ENCODE measurements at regions of chr13 and their contacts with region 1.

Region 1: DNA sequence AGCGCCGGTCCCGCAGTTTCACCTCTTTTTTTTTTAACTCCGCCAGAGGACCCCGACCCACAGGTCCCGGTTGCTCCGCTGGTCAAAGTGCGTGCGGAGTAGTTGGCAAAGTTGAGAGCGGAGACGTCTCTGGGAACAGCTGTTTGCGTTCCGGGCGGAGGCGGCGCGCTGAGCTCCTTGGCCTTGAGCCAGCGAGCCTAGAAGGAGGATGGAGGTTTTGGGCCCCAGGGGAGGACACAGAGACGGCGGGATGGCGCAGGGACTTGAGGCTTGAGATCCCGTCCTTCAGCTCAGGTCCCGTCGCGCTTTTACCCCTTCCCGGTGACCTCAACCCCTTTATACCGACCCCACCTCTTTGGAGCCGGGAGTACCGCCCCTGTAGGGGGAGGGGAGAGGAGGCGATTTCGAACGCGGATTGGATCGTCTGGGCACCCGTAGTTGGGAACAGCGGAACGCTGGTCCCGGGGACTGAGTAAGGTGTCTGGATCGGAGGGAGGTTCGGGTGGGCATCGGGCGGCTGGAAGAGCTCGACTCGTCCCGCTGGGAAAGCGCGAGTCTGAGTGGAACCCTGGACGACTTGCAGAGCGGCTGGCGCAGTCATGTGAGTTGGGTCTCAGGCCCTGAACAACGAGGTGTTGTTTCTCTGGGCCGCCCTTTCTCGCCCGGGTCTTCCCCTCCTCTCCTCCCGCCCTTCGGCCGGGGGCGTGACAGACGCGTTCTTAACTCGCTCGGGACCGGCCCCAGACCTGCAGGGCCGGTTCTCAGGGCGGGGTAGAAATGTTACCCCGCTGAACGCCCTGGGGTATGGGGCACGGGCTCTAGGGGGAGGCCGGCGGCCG is at the start of gene WBP4:
- H3K4me3 ChIP-seq: peak within 1 kb of the TSS; percentile 94
- H3K27ac ChIP-seq: peak within 1 kb of the TSS; percentile 97
- H3K4me1 ChIP-seq: peaks cover 10% of the 10 kb centered on the region
- CTCF ChIP-seq: peak; percentile 25

Region 2: GRCh38 chr13:40922437-40923040 is 138.8 kb before region 1 on chr13:
- CTCF ChIA-PET with region 1: interaction called, 3 read pairs
- POLR2A ChIA-PET with region 1: interaction called, 10 read pairs
- H3K4me3 ChIP-seq: no peak overlapping the region
- H3K27ac ChIP-seq: no peak overlapping the region
- H3K4me1 ChIP-seq: 0 out of 2 replicates have a peak, but pooled peaks cover 2% of the 10 kb centered on the region
- CTCF ChIP-seq: no peak

Region 3: DNA sequence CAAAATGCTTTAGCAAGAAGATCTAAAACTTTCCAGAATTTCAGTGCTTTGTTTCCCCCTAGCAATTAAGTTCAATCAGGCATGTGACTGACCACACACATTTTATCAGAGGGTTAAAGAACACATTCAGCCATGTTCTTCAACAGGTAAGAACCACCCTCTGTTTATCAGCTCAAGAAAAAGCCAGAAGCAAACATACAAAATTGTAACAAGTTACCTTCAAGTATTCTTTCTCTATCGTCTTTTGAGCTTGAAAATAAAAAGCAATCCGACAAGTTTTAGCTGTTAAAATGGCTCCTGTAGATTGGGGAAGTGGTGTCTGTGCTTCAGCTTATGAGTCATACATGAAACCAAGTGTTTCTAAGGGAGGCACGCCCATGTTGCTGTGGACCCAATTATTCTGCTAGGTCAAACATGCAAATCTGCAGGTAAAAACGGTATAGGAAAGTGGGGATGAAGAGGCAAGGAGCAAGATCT is 42.2 kb before region 1 on chr13 and contains the start of gene ELF1:
- CTCF ChIA-PET with region 1: interaction called, 5 read pairs
- POLR2A ChIA-PET with region 1: interaction called, 13 read pairs
- H3K4me3 ChIP-seq: peak within 1 kb of the TSS; percentile 48
- H3K27ac ChIP-seq: peak within 1 kb of the TSS; percentile 38
- H3K4me1 ChIP-seq: peaks cover 2% of the 10 kb centered on the region; the same call in 1 of the 2 replicates
- CTCF ChIP-seq: no peak

Region 4: GRCh38 chr13:41040606-41041319 is 20.5 kb before region 1 on chr13:
- CTCF ChIA-PET with region 1: no interaction called
- POLR2A ChIA-PET with region 1: no interaction called
- H3K4me3 ChIP-seq: no peak overlapping the region
- H3K27ac ChIP-seq: no peak overlapping the region
- H3K4me1 ChIP-seq: no peaks in the 10 kb centered on the region
- CTCF ChIP-seq: no peak

Region 5: GRCh38 chr13:41122838-41123237 is 61.5 kb after region 1 on chr13:
- CTCF ChIA-PET with region 1: no interaction called
- POLR2A ChIA-PET with region 1: no interaction called
- H3K4me3 ChIP-seq: no peak overlapping the region
- H3K27ac ChIP-seq: no peak overlapping the region
- H3K4me1 ChIP-seq: no peaks in the 10 kb centered on the region
- CTCF ChIP-seq: no peak

Region 6: DNA sequence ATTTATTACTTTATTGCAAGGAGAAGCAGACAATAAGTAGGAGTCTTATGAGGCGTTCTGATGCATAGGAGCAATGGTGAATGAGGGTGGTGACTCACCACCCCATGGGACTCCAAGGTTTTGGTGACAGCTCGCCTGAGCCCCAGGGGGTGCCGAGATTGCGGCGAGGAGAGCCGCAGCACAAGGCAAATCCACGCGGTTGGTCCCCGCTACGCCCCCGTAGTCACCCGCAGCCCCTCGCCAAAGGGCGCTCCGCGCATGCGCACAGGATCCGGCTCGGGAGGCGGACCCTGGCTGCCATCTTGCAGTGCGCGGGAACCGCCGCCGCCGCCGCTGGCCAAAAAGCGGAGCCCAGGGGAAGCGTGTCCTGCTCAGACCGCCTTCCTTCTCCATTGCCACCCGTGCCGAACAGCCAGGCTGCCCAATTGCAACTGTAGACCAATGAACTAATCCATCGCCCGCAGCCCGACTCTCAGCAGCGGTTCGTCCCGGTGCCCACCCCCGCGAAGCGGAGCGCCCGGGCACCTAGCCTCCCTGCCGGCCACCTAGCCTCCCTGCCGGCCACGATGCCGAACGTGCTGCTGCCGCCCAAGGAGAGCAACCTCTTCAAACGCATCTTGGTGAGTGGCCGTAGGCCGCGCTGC is 249.8 kb after region 1 on chr13 and contains the start of gene NAA16:
- CTCF ChIA-PET with region 1: no interaction called
- POLR2A ChIA-PET with region 1: no interaction called
- H3K4me3 ChIP-seq: peak within 1 kb of the TSS; percentile 97
- H3K27ac ChIP-seq: peak within 1 kb of the TSS; percentile 89
- H3K4me1 ChIP-seq: peaks cover 12% of the 10 kb centered on the region
- CTCF ChIP-seq: no peak; the same call in 1 of the 2 replicates

Measured in HEK293 (cell line).